Testis (tissue), 5 donors: ENCODE measurements at regions of chr10 and their contacts with region 1.

Region 1: DNA sequence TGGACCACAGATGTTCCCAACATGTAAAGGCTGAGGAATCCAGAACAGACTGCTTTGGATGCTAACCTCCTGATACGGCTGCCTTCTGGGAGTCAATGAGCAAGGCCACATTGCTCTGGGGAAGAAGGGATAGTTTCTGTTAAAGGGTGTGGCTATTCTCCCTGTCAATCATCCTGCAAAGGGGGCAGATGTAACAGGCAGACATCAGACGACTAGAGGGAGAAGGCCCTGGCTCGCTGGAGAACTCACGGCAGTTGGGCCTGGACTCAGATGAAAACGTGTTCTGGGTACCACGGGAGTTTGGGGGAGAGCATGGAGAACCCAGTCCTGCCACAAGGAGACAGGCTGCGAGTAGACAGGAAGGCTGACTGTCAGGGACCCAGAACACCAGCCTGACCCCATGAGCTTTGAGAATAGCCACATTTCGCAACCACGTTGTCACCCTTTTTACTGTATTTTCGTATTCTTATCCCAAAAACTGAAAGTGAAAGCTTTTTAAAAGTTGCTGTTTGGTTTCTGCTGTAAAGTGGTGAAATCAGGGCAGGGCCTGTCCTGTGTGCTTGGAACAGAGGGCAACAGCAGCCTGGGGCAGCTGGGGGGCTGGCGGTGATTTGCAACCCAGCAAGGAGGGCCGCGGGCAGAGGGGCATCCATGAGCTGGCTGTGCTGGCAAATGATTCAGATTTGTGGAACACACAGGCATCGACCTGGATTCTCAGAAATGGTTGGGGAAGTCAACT is 95.3 kb downstream of the MYOF start:
- DNase-seq: no peak
- H3K4me3 ChIP-seq: no peak overlapping the region
- H3K27ac ChIP-seq: peak overlapping the region in 1 of 2 donors; percentile 28
- H3K4me1 ChIP-seq: no peaks in the 10 kb centered on the region
- H3K27me3 ChIP-seq: no peaks in the 10 kb centered on the region
- CTCF ChIP-seq: no peak
- POLR2A ChIP-seq: no peak

Region 2: DNA sequence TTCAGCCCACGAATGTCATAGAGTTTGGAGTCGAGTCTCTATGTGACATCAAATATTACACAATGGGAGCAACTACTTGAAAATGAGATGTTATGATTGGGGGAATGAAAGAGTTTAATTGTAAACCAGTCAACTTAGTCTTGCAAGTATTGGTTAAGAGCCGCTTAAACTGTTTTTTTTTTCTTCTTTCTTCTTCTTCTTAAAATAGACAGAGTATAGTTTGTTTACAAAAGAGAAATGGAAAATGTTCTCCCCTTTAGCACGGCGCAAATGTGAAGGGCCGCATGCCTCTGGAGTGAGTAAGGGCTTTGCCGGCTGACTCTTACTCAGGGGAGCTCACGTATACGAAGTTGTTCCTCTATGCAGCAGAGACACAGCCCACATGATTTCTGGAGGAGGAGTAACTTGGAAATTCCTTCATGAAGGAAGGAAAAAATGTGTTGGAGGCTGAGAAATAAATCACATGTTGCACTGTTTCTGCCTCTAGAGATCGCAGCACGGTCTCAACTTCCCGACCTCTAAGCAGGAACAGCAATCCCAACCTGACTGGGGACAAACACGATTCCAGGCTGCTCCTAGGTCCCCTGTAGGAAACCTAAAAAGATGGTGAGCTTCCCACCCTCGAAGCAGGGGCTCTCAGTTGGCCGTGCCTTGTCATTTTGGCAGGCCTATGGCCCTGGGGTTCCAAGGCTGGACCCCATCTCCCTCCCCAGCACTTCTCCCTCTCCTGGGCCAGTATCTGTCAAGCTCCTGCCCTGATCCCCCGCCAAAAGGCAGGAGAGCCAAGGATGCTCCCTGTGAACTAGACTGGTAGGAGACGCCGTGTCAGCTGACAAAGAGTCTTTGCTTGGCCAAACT is 50.5 kb after region 1 on chr10:
- intact Hi-C with region 1: loop called (anchors 10 kb)
- DNase-seq: peak; percentile 83
- H3K4me3 ChIP-seq: no peak overlapping the region
- H3K27ac ChIP-seq: peak overlapping the region; percentile 97
- H3K4me1 ChIP-seq: peaks cover 33% of the 10 kb centered on the region
- H3K27me3 ChIP-seq: no peaks in the 10 kb centered on the region
- CTCF ChIP-seq: no peak
- POLR2A ChIP-seq: no peak